ENCODE measurements at regions of chr1 and their contacts with region 1.

Region 1: GRCh38 chr1:205907794-205908193 is 35.5 kb downstream of the SLC26A9 start:
- DNase-seq: no peak
- H3K4me3 ChIP-seq: no peak overlapping the region
- CTCF ChIP-seq: peak; percentile 73

Region 2: GRCh38 chr1:205783904-205784303 is 123.9 kb before region 1 on chr1:
- CTCF ChIA-PET with region 1: interaction called, 14 read pairs
- POLR2A ChIA-PET with region 1: no interaction called
- DNase-seq: no peak
- H3K4me3 ChIP-seq: no peak overlapping the region
- CTCF ChIP-seq: no peak

Region 3: GRCh38 chr1:205812878-205813754 is 94.7 kb before region 1 on chr1 and contains the start of gene SLC41A1:
- CTCF ChIA-PET with region 1: interaction called, 25 read pairs
- POLR2A ChIA-PET with region 1: no interaction called
- DNase-seq: peak; percentile 52
- H3K4me3 ChIP-seq: peak within 1 kb of the TSS; percentile 80
- CTCF ChIP-seq: no peak

Region 4: DNA sequence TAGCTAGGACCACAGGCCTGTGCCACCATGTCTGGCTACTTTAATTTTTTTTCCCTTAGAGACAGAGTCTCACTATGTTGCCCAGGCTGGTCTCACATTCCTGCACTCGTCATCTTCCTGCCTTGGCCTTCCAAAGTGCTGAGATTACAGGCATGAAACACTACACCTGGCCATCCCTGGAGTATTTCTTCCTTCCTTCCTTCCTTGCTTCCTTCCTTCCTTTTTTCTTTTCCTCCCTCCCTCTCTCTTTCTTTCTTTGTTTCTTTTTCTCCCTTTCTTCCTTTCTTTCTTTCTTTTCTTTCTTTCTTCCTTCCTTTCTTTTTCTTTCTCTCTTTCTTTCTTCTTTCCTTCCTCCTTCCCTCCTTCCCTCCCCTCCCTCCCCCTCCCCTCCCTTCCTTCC is 11.5 kb before region 1 on chr1:
- CTCF ChIA-PET with region 1: interaction called, 20 read pairs
- POLR2A ChIA-PET with region 1: no interaction called
- DNase-seq: no peak
- H3K4me3 ChIP-seq: no peak overlapping the region
- CTCF ChIP-seq: no peak

Measured in AG04449 (cell line).